Cardiac septum (tissue), 1 donor: ENCODE measurements at regions of chr19 and their contacts with region 1.

Region 1: DNA sequence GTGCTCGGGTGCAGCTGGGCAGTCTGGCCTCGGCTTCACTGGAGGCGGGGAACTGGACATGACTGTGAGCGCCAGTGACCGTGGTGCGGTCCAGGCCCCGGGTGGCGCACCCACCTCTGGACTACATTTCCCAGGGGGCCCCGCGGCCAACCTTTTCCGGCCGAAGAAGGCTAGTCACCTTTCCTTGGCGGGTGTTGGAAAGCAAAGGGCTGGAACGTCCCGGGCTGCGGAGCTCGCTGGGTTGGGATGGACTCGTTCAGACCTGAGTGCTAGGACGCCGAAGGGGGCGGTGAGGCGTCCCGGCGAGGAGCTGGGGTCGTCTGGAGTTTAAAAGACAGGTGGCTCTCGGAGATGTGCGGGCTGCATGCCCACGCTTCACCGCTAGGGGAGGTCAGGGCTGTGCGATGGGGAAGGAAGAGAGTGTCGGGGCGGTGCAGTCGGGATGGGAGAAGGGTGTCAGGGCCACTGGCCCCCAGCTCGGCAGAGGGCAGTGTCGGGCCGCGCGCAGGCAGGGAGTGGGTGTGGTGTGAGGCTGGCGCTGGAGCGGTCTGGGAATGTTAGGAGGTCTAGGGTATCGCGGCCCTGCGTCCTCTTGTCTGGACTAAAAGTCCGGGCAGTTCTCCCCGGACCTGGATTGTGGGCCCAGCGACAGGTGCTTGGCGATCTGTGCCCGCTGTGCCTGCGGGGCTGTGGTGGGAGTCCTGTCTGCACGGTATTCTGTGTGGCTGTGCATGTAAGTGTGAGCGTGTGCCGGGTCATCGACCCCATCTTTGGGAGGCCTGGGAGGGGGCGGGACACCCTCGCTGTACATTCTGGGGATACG is 57.1 kb downstream of the ZNF568 start:
- DNase-seq: peak; percentile 91

Region 2: DNA sequence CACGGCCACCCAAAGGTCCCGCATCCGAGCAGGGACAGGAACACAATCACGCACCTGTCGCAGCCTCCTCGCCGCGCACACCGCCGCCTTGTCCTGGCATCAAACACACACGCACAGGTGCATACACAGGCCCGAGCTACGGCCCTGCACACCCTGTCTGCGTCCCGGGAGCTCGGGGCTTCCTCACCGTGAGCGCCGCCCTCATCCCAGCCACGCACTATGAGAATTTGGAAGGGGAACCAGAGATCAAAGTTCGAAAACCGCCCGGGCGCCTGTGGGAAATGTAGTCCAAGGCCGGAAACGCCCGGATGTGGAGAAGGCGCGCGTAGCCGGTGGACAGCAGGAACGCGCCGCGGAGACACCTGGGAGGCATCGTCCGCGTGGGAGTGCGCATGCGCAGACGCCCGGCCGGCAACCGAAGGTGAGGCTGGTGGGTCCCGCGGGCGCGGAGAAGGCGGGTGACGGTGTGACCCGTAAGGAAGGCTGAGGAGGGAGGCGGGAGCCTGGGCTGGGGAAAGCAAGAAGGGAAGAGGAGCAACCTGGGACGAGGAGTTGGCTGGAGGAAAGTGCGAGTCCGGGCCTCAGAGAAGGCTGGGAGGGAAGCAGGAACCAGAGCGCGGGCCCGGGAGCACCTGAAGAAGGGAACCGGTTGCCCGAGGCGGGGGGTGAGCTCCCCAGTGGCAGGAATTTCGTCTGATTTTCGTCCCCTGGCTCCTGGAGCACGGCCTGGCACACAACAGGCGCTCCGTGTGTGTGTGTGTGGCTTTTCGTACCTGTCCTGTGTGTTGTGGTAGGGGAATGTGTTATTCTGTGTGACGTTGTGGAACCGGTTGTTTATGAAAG is 285.8 kb before region 1 on chr19 and contains the start of gene ZNF567:
- intact Hi-C with region 1: loop called (anchors 1 kb)
- DNase-seq: peak; percentile 98
- total RNA-seq, gene ZNF567: 3.0 TPM

Region 3: GRCh38 chr19:36775748-36776147 is 197.5 kb before region 1 on chr19:
- intact Hi-C with region 1: no loop called
- DNase-seq: no peak

Region 4: DNA sequence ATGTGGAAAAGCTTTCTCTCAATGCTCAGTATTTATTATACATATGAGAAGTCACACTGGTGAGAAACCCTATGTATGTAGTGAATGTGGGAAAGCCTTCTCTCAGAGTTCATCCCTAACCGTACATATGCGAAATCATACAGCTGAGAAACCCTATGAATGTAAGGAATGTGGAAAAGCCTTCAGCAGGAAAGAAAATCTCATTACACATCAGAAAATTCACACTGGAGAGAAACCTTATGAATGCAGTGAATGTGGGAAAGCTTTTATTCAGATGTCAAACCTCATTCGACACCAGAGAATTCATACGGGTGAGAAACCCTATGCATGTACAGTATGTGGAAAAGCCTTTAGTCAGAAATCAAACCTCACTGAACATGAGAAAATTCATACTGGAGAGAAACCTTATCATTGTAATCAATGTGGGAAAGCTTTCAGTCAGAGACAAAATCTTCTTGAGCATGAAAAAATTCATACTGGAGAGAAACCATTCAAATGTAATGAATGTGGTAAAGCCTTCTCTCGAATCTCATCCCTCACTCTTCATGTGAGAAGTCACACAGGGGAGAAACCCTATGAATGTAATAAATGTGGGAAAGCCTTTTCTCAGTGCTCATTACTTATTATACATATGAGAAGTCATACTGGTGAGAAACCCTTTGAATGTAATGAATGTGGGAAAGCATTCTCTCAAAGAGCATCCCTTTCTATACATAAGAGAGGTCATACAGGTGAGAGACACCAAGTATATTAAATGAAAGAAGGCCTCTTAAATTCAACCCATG is 22.7 kb before region 1 on chr19:
- intact Hi-C with region 1: no loop called
- DNase-seq: no peak

Region 5: DNA sequence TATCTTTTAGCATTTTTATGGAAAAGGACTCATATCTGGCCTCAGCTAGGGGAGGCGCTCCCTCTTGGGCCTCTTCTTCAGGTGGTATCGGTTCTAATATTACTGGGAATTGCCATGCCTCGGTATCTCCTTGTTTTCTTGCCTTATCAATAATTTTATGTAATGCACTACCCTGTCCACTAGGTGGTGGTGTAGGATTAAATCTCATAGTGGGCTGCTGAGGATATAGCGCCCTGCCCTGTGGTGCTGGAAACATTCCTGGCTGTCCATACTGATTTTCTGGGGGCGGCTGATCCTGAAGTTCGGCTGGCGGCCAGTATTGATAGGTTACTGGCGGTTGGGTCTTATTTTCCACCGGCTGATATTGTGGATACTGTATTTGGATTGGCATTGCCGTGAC is 140.8 kb after region 1 on chr19:
- intact Hi-C with region 1: loop called (anchors 5 kb)
- DNase-seq: no peak

Region 6: GRCh38 chr19:37172368-37173366 is 199.4 kb after region 1 on chr19 and contains the start of gene ZNF585A:
- intact Hi-C with region 1: loop called (anchors 5 kb)
- DNase-seq: peak; percentile 95
- total RNA-seq, gene ZNF585A: 12.2 TPM

Region 7: GRCh38 chr19:37217855-37218591 is 244.8 kb after region 1 on chr19 and contains the start of gene ZNF383:
- intact Hi-C with region 1: loop called (anchors 2 kb)
- DNase-seq: peak; percentile 92
- total RNA-seq, gene ZNF383: 9.2 TPM